Esophagus squamous epithelium (tissue), 5 donors: ENCODE measurements at regions of chr19 and their contacts with region 1.

Region 1: GRCh38 chr19:10112895-10113591 is 1.6 kb downstream of the P2RY11 start:
- DNase-seq: no peak
- H3K4me3 ChIP-seq: peak overlapping the region in 1 of 4 donors; percentile 23
- H3K27ac ChIP-seq: peak overlapping the region in 2 of 4 donors; percentile 44 to 57
- H3K4me1 ChIP-seq: peaks cover 4 to 44% (median 13%) of the 10 kb centered on the region in 3 donors
- H3K27me3 ChIP-seq: no peaks in the 10 kb centered on the region
- CTCF ChIP-seq: peak; percentile 46 to 78 (median 57)
- POLR2A ChIP-seq: no peak

Region 2: DNA sequence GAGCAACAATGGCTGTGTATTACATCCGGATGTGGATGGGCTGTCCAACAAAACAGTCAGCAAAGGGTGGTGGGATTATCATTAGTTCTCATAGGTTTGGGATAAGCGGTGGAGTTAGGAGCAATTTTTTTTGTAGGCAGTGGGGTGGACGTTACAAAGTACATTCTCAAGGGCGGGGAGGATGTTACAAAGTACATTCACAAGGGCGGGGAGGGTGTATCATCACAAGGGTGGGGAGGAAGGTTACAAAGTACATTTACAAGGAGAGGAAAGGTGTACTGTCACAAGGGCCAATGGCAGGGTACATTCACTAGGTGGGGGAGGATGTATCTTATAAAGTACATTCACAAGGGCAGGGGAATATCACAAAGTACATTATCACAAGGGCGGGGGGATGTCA is 471.2 kb before region 1 on chr19:
- intact Hi-C with region 1: no loop called
- DNase-seq: no peak
- H3K4me3 ChIP-seq: no peak overlapping the region
- H3K27ac ChIP-seq: no peak overlapping the region
- H3K4me1 ChIP-seq: no peaks in the 10 kb centered on the region
- H3K27me3 ChIP-seq: no peaks in the 10 kb centered on the region
- CTCF ChIP-seq: no peak
- POLR2A ChIP-seq: no peak

Region 3: DNA sequence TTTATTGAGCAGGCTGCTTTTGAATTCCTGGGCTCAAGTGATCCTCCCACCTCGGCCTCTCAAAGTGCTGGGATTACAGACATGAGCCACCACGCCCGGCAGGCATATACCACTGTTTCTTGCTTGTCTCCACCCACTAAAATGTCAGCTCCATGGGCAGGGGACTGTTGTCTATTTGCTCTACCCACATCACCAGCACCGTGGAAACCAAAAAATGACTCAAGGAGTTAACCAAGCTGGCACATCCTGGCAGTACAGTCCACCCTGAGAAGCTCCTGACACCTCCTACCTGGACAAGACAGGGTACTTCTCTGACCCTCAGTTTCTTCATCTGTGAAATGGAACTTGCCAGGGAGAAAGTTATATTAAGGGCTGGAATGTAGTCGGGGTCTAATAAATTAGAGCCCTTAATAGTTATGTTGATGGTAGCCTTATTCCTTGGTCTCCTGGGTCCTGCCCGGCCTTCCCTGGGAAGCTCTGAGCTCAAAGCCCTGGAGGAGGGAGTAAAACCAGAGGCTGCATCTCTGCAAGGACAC is 85.8 kb before region 1 on chr19:
- intact Hi-C with region 1: no loop called
- DNase-seq: no peak
- H3K4me3 ChIP-seq: peak overlapping the region in 1 of 4 donors; percentile 9
- H3K27ac ChIP-seq: peak overlapping the region in 1 of 4 donors; percentile 4
- H3K4me1 ChIP-seq: peaks cover 0 to 12% (median 6%) of the 10 kb centered on the region in 3 donors
- H3K27me3 ChIP-seq: peaks cover 0 to 25% (median 0%) of the 10 kb centered on the region in 4 donors
- CTCF ChIP-seq: no peak
- POLR2A ChIP-seq: no peak

Region 4: GRCh38 chr19:10251792-10252694 is 139.0 kb after region 1 on chr19 and contains the start of gene MRPL4:
- intact Hi-C with region 1: loop called (anchors 10 kb)
- DNase-seq: peak; percentile 86
- H3K4me3 ChIP-seq: peak within 1 kb of the TSS; percentile 54 to 83 (median 80)
- H3K27ac ChIP-seq: peak within 1 kb of the TSS; percentile 83 to 93 (median 92)
- H3K4me1 ChIP-seq: peaks cover 0 to 39% (median 7%) of the 10 kb centered on the region in 3 donors
- H3K27me3 ChIP-seq: no peaks in the 10 kb centered on the region
- CTCF ChIP-seq: peak in 3 of 6 experiments; percentile 18 to 30 (median 30)
- POLR2A ChIP-seq: peak in 3 of 4 donors; percentile 34 to 60 (median 50)
- total RNA-seq, gene MRPL4: 77.6 to 105 (median 92.6) TPM